ENCODE measurements at regions of chr3 and their contacts with region 1.

Region 1: DNA sequence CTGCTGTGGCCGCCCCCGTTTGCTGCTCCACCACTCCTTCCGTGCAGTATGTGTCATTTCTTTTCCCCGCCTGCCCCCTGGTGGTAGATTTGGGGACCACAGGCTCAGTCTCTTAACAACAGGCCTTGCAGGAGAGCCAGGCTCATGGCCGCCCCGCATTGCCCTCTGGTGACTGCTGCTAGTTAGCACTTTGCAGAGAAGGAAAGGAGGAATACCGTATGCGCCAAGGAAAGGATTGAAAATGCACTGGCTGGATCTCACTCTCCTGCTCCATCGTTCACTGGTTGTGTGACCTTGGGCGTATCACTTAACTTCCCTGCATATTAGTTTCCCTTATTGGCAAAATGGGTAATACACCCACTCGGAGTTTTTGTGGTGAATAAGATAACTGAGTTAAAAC is 39.3 kb upstream of the PXYLP1 start:
- DNase-seq: peak; percentile 96
- ATAC-seq: peak; percentile 98 to 99 (median 99)
- H3K4me3 ChIP-seq: no peak overlapping the region
- H3K27ac ChIP-seq: no peak overlapping the region
- H3K4me1 ChIP-seq: peaks cover 0 to 4% (median 0%) of the 10 kb centered on the region in 9 donors
- H3K27me3 ChIP-seq: peaks cover 0 to 17% (median 6%) of the 10 kb centered on the region in 7 donors
- CTCF ChIP-seq: peak; percentile 96 to 99 (median 99)

Region 2: DNA sequence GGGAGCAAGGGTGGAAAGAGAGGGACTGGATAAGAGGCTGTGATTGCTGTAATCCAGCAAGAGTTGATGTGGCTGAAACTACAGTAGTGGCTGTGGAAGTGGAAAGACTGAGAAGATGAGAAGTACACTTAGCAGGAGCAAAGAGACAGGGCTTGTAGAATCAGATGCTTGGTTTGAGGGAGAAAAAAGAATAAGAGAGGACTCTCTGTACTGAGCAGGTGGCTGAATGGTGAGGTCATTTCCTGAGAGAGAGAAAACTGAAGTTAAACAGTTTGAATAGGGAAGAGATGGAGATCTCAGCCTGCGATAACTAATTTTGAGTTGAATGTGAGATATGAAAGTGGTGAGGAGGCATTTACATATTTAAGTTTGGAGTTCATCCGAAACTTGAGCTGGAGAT is 346.5 kb before region 1 on chr3:
- intact Hi-C with region 1: no loop called
- DNase-seq: no peak
- ATAC-seq: no peak
- H3K4me3 ChIP-seq: no peak overlapping the region
- H3K27ac ChIP-seq: no peak overlapping the region
- H3K4me1 ChIP-seq: peaks cover 0 to 10% (median 0%) of the 10 kb centered on the region in 9 donors
- H3K27me3 ChIP-seq: peaks cover 0 to 25% (median 3%) of the 10 kb centered on the region in 7 donors
- CTCF ChIP-seq: no peak

Region 3: DNA sequence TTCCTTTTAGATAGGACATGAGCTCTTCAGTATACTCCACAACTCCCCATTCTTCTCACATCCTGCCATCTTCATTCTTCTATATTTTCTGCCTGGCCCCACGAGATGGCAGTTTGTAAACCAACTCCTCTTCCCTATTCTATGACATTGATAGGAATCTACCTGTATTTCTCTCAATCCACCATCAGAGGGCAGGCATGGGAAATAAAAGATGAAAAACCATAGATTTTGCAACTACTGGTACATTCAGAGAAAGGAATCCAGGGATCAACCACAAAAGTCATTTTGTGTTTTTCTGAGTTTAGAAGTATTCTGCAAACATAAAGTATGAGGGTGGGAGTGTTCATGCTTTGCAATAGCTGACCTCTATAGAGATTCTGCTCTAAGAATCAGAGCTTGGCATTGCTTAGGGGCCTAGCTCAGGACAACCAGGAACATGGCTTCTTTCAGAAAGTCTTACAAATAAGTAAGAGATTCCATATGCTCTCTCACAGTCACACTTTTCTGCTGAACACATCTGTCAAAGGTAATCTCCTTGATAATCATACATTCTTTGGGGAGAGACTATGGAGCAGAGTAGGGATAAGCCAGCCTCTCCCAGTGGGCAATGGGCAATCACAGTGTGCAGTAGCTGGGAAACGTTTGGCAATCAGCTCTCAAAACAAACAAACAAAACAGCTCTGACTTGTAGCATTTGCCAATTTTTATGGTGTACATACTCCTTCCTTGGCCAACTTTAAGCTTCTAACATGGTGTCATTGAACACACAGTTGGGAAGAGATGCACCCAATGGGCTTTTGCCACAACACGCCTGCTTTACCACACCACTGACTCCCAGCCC is 293.8 kb before region 1 on chr3:
- intact Hi-C with region 1: loop called in 7 of 10 experiments (anchors 5 to 10 kb)
- DNase-seq: no peak
- ATAC-seq: peak in 4 of 8 donors; percentile 23 to 65 (median 44)
- H3K4me3 ChIP-seq: no peak overlapping the region
- H3K27ac ChIP-seq: no peak overlapping the region
- H3K4me1 ChIP-seq: peaks cover 0 to 3% (median 0%) of the 10 kb centered on the region in 9 donors
- H3K27me3 ChIP-seq: peaks cover 0 to 8% (median 0%) of the 10 kb centered on the region in 7 donors
- CTCF ChIP-seq: peak; percentile 17 to 68 (median 55)

Region 4: DNA sequence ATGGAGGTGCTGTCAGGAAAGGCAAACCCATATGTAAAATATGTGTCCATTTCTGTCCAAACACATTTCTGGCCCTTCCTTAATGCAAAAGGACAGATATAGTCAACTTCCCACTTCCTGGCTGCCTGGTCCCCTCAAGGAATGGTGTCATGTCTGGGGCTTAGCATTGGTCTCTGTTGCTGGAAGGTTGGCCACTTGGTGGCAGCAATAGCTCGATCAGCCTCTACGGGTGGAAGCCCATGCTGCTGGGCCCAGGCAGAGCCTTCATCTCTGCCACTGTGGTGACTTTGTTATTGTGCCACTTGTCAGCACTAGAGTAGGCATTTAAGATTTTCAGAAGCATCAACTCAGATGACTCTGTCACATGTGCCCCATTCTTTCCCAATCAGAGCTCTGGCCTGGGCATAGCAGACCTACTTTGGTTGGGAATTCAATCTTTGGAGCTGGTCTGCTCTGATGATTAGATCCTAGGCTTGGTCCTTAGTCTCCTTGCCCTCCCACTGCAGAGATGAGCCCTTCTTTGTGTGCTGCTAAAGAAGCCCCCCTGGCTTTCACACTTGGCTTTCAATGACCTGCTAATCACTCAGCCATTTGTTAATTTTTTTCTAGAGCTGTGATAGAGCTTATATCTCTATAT is 192.2 kb before region 1 on chr3:
- intact Hi-C with region 1: loop called in 9 of 10 experiments (anchors 1 to 5 kb)
- DNase-seq: peak; percentile 62 to 63
- ATAC-seq: peak; percentile 91 to 97 (median 94)
- H3K4me3 ChIP-seq: no peak overlapping the region
- H3K27ac ChIP-seq: no peak overlapping the region
- H3K4me1 ChIP-seq: no peaks in the 10 kb centered on the region
- H3K27me3 ChIP-seq: no peaks in the 10 kb centered on the region
- CTCF ChIP-seq: peak; percentile 47 to 85 (median 77)

Region 5: GRCh38 chr3:141011232-141011996 is 180.9 kb before region 1 on chr3:
- intact Hi-C with region 1: loop called in 3 of 10 experiments (anchors 1 to 5 kb)
- DNase-seq: peak; percentile 78 to 85
- ATAC-seq: peak; percentile 62 to 84 (median 78)
- H3K4me3 ChIP-seq: no peak overlapping the region
- H3K27ac ChIP-seq: no peak overlapping the region
- H3K4me1 ChIP-seq: peaks cover 0 to 11% (median 5%) of the 10 kb centered on the region in 9 donors
- H3K27me3 ChIP-seq: peaks cover 0 to 12% (median 5%) of the 10 kb centered on the region in 7 donors
- CTCF ChIP-seq: peak; percentile 58 to 89 (median 84)

Region 6: GRCh38 chr3:141412087-141412935 is 220.0 kb after region 1 on chr3:
- intact Hi-C with region 1: no loop called
- DNase-seq: peak in 1 of 2 donors; percentile 75
- ATAC-seq: peak; percentile 19 to 81 (median 70)
- H3K4me3 ChIP-seq: peak overlapping the region in 9 of 10 donors; percentile 9 to 49 (median 40)
- H3K27ac ChIP-seq: peak overlapping the region; percentile 88 to 99 (median 96)
- H3K4me1 ChIP-seq: peaks cover 17 to 99% (median 95%) of the 10 kb centered on the region in 9 donors
- H3K27me3 ChIP-seq: no peaks in the 10 kb centered on the region
- CTCF ChIP-seq: no peak

Measured in heart right ventricle (tissue), 16 donors.